Mammary epithelial cell (primary cell): ENCODE measurements at regions of chr1 and their contacts with region 1.

Region 1: DNA sequence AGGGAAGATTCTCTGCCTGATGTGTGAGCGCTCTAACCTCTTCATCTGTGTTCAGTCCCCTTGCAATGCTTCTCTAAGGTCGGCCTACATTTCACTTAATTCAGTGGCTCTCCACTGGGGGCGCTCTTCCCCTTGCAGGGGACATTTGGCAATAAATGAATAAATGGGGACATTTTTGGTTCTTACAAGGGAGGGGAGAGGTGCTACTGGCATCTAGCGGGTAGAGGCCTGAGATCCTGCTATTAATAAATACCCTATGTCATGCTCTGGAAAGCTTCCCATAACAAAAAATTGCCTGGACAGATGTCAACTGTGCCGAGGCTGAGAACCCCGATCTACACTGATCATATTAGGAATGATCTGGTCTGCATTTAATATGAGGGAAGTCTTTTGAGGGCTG is 25.9 kb upstream of the DNAJC11 start:
- DNase-seq: peak; percentile 34
- H3K4me3 ChIP-seq: no peak overlapping the region
- H3K27ac ChIP-seq: no peak overlapping the region
- H3K4me1 ChIP-seq: peaks cover 11% of the 10 kb centered on the region
- H3K27me3 ChIP-seq: no peaks in the 10 kb centered on the region
- CTCF ChIP-seq: peak; percentile 91 to 95

Region 2: GRCh38 chr1:6770751-6771440 is 43.4 kb after region 1 on chr1:
- CTCF ChIA-PET with region 1: no interaction called
- dilution Hi-C with region 1: no loop called
- in situ Hi-C with region 1: loop called in 1 of 2 experiments (anchors 10 kb)
- intact Hi-C with region 1: no loop called
- DNase-seq: peak; percentile 75
- H3K4me3 ChIP-seq: no peak overlapping the region
- H3K27ac ChIP-seq: no peak overlapping the region
- H3K4me1 ChIP-seq: peaks cover 9% of the 10 kb centered on the region
- H3K27me3 ChIP-seq: no peaks in the 10 kb centered on the region
- CTCF ChIP-seq: no peak

Region 3: DNA sequence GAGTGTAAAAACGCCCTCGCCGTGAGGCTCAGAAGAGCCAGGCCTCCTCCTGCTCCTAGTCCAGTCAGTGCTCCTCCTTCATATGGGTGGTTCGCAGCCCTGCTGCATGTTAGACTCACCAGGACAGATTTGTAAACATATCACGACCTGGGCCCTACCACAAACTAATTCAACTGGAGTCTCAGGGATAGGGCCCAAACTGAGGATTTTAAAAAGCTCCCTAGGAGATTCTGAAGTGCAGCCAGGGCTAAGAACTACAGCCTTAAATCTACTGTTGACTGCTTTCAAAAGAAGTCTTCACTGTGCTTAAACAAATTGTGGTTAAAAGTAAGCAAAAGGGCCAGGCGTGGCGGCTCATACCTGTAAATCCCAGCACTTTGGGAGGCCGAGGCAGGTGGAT is 114.8 kb after region 1 on chr1:
- CTCF ChIA-PET with region 1: no interaction called
- dilution Hi-C with region 1: no loop called
- in situ Hi-C with region 1: no loop called
- intact Hi-C with region 1: no loop called
- DNase-seq: no peak
- H3K4me3 ChIP-seq: no peak overlapping the region
- H3K27ac ChIP-seq: no peak overlapping the region
- H3K4me1 ChIP-seq: no peaks in the 10 kb centered on the region
- H3K27me3 ChIP-seq: no peaks in the 10 kb centered on the region
- CTCF ChIP-seq: no peak

Region 4: DNA sequence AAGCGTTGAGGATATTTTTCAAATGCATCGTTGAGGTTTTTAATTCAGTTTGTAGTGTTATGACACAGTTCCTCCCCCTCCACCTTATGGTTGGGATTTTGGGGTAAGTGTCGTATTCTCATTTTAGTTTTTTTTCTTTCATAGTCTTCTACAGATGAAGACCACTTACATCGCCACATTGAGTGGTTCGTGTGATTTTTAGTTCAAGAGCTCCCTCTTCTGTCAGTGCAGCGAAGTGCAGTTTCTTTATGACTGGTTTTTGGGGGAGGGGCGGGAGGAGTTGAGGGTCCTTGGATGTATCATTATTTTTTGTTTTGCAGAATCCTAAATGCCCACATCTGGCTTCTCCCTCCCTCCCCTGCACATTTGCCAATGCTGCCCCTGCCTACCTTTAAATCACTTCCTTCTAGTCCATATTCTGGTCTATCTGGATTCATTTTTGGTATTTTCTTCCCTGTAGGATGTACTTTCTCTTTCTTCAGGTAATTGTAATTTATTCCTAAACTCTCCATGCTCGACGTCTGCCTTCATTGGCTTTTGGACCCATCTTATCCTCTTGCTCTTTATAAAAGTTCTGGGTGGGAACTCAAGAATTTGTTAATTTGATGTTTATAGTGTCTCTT is 490.8 kb after region 1 on chr1:
- CTCF ChIA-PET with region 1: no interaction called
- dilution Hi-C with region 1: no loop called
- in situ Hi-C with region 1: loop called (anchors 10 to 25 kb)
- intact Hi-C with region 1: no loop called
- DNase-seq: peak; percentile 14
- H3K4me3 ChIP-seq: no peak overlapping the region
- H3K27ac ChIP-seq: no peak overlapping the region
- H3K4me1 ChIP-seq: no peaks in the 10 kb centered on the region
- H3K27me3 ChIP-seq: no peaks in the 10 kb centered on the region
- CTCF ChIP-seq: peak; percentile 78 to 83